GM12878 (cell line): ENCODE measurements at regions of chr2 and their contacts with region 1.

Region 1: DNA sequence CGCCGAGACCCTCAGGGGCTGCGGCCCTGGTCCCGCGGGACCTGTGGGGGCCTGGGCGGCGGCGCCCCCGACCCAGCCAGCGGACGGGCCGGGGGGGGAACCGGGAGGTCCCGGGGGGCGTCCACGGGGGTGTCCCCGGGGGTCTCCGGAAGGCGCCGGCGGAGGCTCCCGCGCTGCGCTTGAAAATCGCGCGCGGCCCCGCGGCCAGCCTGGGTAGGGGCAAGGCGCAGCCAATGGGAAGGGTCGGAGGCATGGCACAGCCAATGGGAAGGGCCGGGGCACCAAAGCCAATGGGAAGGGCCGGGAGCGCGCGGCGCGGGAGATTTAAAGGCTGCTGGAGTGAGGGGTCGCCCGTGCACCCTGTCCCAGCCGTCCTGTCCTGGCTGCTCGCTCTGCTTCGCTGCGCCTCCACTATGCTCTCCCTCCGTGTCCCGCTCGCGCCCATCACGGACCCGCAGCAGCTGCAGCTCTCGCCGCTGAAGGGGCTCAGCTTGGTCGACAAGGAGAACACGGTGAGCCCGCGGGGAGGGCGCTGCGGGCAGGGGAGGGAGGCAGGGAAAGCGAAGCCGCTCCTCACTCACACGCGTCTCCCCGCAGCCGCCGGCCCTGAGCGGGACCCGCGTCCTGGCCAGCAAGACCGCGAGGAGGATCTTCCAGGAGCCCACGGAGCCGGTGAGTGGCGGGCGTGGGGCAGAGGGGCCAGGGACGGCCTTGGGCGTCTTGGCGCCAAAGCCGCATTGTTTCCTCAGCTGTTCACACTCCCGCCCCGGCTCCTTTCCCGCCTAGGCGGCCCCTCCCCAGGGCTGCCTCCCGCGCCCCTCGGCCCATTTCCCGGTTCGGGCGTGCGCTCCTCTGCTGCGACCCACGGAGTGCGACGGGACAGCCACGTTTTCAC is at the start of gene RRM2:
- DNase-seq: peak; percentile 65
- ATAC-seq: peak; percentile 81
- H3K4me3 ChIP-seq: peak within 1 kb of the TSS; percentile 71
- H3K27ac ChIP-seq: peak within 1 kb of the TSS; percentile 98
- H3K4me1 ChIP-seq: peaks cover 5% of the 10 kb centered on the region
- H3K27me3 ChIP-seq: no peaks in the 10 kb centered on the region
- CTCF ChIP-seq: no peak
- EP300 ChIP-seq: no peak
- POLR2A ChIP-seq: peak; percentile 99
- RAD21 ChIP-seq: no peak
- polyA plus RNA-seq, gene RRM2: 54.4 to 64.5 TPM

Region 2: GRCh38 chr2:10064932-10065772 is 57.5 kb before region 1 on chr2:
- CTCF ChIA-PET with region 1: no interaction called
- POLR2A ChIA-PET with region 1: no interaction called
- RAD21 ChIA-PET with region 1: no interaction called
- SMC1A ChIA-PET with region 1: no interaction called
- in situ Hi-C with region 1: no loop called
- intact Hi-C with region 1: no loop called
- DNase-seq: no peak
- ATAC-seq: no peak
- H3K4me3 ChIP-seq: no peak overlapping the region
- H3K27ac ChIP-seq: no peak overlapping the region
- H3K4me1 ChIP-seq: no peaks in the 10 kb centered on the region
- H3K27me3 ChIP-seq: no peaks in the 10 kb centered on the region
- CTCF ChIP-seq: no peak
- EP300 ChIP-seq: no peak
- POLR2A ChIP-seq: no peak
- RAD21 ChIP-seq: no peak

Region 3: GRCh38 chr2:10079234-10079869 is 43.3 kb before region 1 on chr2:
- CTCF ChIA-PET with region 1: interaction called, 29 read pairs
- POLR2A ChIA-PET with region 1: interaction called, 15 read pairs
- RAD21 ChIA-PET with region 1: interaction called, 42 read pairs
- SMC1A ChIA-PET with region 1: interaction called, 31 read pairs
- in situ Hi-C with region 1: no loop called
- intact Hi-C with region 1: loop called (anchors 2 kb)
- DNase-seq: no peak
- ATAC-seq: peak; percentile 28
- H3K4me3 ChIP-seq: peak overlapping the region; percentile 57
- H3K27ac ChIP-seq: peak overlapping the region; percentile 40; the same call in 1 of the 2 replicates
- H3K4me1 ChIP-seq: peaks cover 50% of the 10 kb centered on the region
- H3K27me3 ChIP-seq: no peaks in the 10 kb centered on the region
- CTCF ChIP-seq: no peak
- EP300 ChIP-seq: no peak
- POLR2A ChIP-seq: no peak
- RAD21 ChIP-seq: no peak

Region 4: GRCh38 chr2:10097352-10098148 is 25.1 kb before region 1 on chr2:
- CTCF ChIA-PET with region 1: interaction called, 24 read pairs
- POLR2A ChIA-PET with region 1: interaction called, 3 read pairs
- RAD21 ChIA-PET with region 1: interaction called, 8 read pairs
- SMC1A ChIA-PET with region 1: interaction called, 25 read pairs
- in situ Hi-C with region 1: no loop called
- intact Hi-C with region 1: no loop called
- DNase-seq: no peak
- ATAC-seq: peak; percentile 96
- H3K4me3 ChIP-seq: no peak overlapping the region
- H3K27ac ChIP-seq: no peak overlapping the region
- H3K4me1 ChIP-seq: peaks cover 2% of the 10 kb centered on the region; the same call in 1 of the 2 replicates
- H3K27me3 ChIP-seq: no peaks in the 10 kb centered on the region
- CTCF ChIP-seq: peak; percentile 91 to 99 (median 92)
- EP300 ChIP-seq: no peak
- POLR2A ChIP-seq: no peak
- RAD21 ChIP-seq: peak; percentile 80

Region 5: GRCh38 chr2:10157293-10157692 is 34.7 kb after region 1 on chr2:
- CTCF ChIA-PET with region 1: interaction called, 13 read pairs
- POLR2A ChIA-PET with region 1: no interaction called
- RAD21 ChIA-PET with region 1: no interaction called
- SMC1A ChIA-PET with region 1: no interaction called
- in situ Hi-C with region 1: no loop called
- intact Hi-C with region 1: no loop called
- DNase-seq: no peak
- ATAC-seq: 0 out of 3 replicates have a peak, but pooled peaks have one; percentile 31
- H3K4me3 ChIP-seq: no peak overlapping the region
- H3K27ac ChIP-seq: no peak overlapping the region
- H3K4me1 ChIP-seq: no peaks in the 10 kb centered on the region
- H3K27me3 ChIP-seq: no peaks in the 10 kb centered on the region
- CTCF ChIP-seq: no peak
- EP300 ChIP-seq: no peak
- POLR2A ChIP-seq: no peak
- RAD21 ChIP-seq: no peak

Region 6: GRCh38 chr2:10448208-10448645 is 325.6 kb after region 1 on chr2 and contains the start of gene ODC1:
- CTCF ChIA-PET with region 1: interaction called, 25 read pairs
- POLR2A ChIA-PET with region 1: interaction called, 7 read pairs
- RAD21 ChIA-PET with region 1: interaction called, 7 read pairs
- SMC1A ChIA-PET with region 1: interaction called, 7 read pairs
- in situ Hi-C with region 1: no loop called
- intact Hi-C with region 1: no loop called
- DNase-seq: peak; percentile 53
- ATAC-seq: peak; percentile 76
- H3K4me3 ChIP-seq: peak within 1 kb of the TSS; percentile 77
- H3K27ac ChIP-seq: peak within 1 kb of the TSS; percentile 93
- H3K4me1 ChIP-seq: peaks cover 25% of the 10 kb centered on the region
- H3K27me3 ChIP-seq: no peaks in the 10 kb centered on the region
- CTCF ChIP-seq: no peak
- EP300 ChIP-seq: no peak; a peak in 1 of 4 replicates
- POLR2A ChIP-seq: peak; percentile 87; the same call in 1 of the 2 replicates
- RAD21 ChIP-seq: no peak
- polyA plus RNA-seq, gene ODC1: 131 to 235 TPM

Region 7: DNA sequence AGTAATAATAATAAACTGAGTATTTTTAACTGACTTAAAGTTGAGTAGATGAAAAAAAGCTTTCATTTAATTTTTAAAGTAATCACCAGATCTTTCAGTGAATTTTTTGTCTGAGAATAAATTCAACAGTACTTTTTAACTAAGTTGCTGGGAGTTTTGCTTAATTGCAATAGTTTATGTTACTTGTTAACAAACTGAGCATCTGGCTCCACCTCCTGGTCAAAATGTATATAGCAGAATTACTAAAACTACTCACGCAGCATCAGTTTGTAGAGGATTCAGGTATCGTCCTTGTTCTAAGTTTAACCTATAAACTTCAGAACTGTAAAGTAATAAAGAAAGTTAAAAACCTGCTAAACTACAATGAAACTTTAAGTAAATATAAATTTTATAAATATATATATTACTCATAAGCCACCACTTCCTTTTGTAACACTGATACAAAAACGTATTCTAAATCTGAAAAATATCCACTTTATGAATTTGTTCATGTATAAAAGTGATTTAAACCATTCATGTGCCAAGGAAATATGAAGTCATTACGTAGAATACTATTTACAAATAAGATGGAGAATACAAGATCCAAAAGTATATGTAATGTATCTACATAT is 545.9 kb after region 1 on chr2:
- CTCF ChIA-PET with region 1: interaction called, 8 read pairs
- POLR2A ChIA-PET with region 1: no interaction called
- RAD21 ChIA-PET with region 1: no interaction called
- SMC1A ChIA-PET with region 1: no interaction called
- in situ Hi-C with region 1: no loop called
- intact Hi-C with region 1: loop called (anchors 5 kb)
- DNase-seq: peak; percentile 27
- ATAC-seq: peak; percentile 76
- H3K4me3 ChIP-seq: no peak overlapping the region
- H3K27ac ChIP-seq: no peak overlapping the region
- H3K4me1 ChIP-seq: no peaks in the 10 kb centered on the region
- H3K27me3 ChIP-seq: no peaks in the 10 kb centered on the region
- CTCF ChIP-seq: peak; percentile 51 to 65 (median 62)
- EP300 ChIP-seq: no peak
- POLR2A ChIP-seq: no peak
- RAD21 ChIP-seq: peak; percentile 61